WTC11 (cell line): ENCODE measurements at regions of chr4 and their contacts with region 1.

Region 1: GRCh38 chr4:127880764-127881562 is at the start of gene PLK4:
- DNase-seq: peak; percentile 97
- ATAC-seq: peak; percentile 96
- H3K4me3 Mint-ChIP-seq: peak within 1 kb of the TSS; percentile 91
- H3K27ac Mint-ChIP-seq: peak within 1 kb of the TSS; percentile 99
- H3K4me1 Mint-ChIP-seq: peaks cover 12% of the 10 kb centered on the region
- H3K27me3 Mint-ChIP-seq: no peaks in the 10 kb centered on the region
- CTCF ChIP-seq: no peak
- total RNA-seq, gene PLK4: 37.8 to 44.0 TPM (median 38.6 TPM) in 3 replicates

Region 2: GRCh38 chr4:127782274-127783025 is 98.5 kb before region 1 on chr4 and contains the start of gene HSPA4L:
- CTCF ChIA-PET with region 1: interaction called, 10 read pairs
- POLR2A ChIA-PET with region 1: interaction called, 16 read pairs
- DNase-seq: peak; percentile 43
- ATAC-seq: peak; percentile 50
- H3K4me3 Mint-ChIP-seq: peak within 1 kb of the TSS; percentile 94
- H3K27ac Mint-ChIP-seq: peak within 1 kb of the TSS; percentile 92
- H3K4me1 Mint-ChIP-seq: peaks cover 30% of the 10 kb centered on the region
- H3K27me3 Mint-ChIP-seq: peaks cover 56% of the 10 kb centered on the region
- CTCF ChIP-seq: no peak
- total RNA-seq, gene HSPA4L: 6.9 to 9.9 TPM (median 9.6 TPM) in 3 replicates

Region 3: DNA sequence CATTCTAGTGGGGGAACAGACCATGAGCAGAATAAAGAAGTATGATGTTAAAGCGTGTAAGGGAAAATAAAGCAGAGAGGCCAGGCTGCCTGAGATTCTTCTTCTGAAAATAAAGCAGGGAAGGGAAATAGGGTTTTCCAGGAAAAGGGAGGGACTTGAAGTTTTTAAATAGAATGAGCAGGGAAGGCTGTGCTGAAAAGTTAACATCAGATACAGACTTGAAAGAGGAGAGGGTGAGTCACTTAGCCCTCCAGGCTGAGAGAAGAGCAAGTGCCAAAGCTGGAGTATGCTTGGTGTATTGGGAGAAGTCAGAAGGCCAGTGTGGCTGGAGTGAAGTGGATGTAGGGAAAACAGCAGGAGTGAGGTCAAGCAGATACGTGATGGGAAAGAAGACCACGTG is 10.3 kb before region 1 on chr4:
- CTCF ChIA-PET with region 1: no interaction called
- POLR2A ChIA-PET with region 1: no interaction called
- DNase-seq: no peak
- ATAC-seq: no peak; the same call in 1 of the 2 replicates
- H3K4me3 Mint-ChIP-seq: no peak overlapping the region
- H3K27ac Mint-ChIP-seq: peak overlapping the region; percentile 52
- H3K4me1 Mint-ChIP-seq: peaks cover 3% of the 10 kb centered on the region; the same call in 1 of the 2 replicates
- H3K27me3 Mint-ChIP-seq: no peaks in the 10 kb centered on the region
- CTCF ChIP-seq: no peak

Region 4: DNA sequence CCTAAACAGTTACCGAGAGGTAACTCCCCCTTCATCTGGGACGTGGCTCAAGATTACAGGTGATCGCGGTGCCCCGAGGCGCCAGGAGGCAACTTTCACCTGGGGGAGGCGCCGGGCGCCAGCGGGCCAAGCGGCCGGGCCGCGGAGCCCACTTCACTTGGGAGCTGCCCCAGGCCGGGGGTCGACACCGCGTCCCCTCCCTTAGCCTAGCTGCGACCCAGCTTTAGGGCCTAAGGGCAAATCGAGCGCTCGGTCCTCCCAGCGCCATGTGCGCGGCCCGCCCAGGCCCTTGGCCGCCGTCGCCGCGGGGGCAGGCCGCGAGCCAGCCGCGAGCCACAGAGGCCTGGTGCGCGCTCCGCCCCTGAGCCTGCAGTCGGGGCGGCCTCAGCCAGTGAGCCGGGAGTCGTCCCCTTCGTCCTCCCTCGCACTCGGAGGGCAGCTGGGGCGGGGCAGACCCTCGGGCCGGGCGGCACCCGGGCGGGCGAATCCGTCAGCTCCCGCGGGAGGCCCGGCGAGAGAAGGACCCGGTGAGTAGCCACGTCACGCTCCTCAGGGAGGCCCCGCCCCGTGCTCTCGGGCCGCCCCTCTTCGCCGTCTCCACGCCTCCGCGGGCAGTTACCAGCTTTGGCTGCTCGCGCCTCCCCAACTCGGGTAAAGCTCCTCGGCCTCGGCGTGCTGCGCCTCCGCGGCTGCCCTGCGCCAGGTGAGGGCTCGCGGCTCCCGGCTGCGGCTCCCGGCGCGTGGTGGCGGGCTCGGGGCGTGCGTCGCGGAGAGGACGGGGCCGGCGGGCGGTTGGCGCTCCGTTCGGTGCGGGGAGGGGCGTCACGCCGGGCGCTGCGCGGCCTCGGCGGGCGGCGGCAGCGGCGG is 180.0 kb after region 1 on chr4 and contains the start of gene LARP1B:
- CTCF ChIA-PET with region 1: interaction called, 3 read pairs
- POLR2A ChIA-PET with region 1: interaction called, 26 read pairs
- DNase-seq: peak; percentile 96
- ATAC-seq: peak; percentile 89
- H3K4me3 Mint-ChIP-seq: peak within 1 kb of the TSS; percentile 92
- H3K27ac Mint-ChIP-seq: peak within 1 kb of the TSS; percentile 95
- H3K4me1 Mint-ChIP-seq: peaks cover 31% of the 10 kb centered on the region
- H3K27me3 Mint-ChIP-seq: no peaks in the 10 kb centered on the region
- CTCF ChIP-seq: no peak
- total RNA-seq, gene LARP1B: 31.0 to 35.6 TPM (median 31.1 TPM) in 3 replicates